A673 (cell line): ENCODE measurements at regions of chr3 and their contacts with region 1.

Region 1: DNA sequence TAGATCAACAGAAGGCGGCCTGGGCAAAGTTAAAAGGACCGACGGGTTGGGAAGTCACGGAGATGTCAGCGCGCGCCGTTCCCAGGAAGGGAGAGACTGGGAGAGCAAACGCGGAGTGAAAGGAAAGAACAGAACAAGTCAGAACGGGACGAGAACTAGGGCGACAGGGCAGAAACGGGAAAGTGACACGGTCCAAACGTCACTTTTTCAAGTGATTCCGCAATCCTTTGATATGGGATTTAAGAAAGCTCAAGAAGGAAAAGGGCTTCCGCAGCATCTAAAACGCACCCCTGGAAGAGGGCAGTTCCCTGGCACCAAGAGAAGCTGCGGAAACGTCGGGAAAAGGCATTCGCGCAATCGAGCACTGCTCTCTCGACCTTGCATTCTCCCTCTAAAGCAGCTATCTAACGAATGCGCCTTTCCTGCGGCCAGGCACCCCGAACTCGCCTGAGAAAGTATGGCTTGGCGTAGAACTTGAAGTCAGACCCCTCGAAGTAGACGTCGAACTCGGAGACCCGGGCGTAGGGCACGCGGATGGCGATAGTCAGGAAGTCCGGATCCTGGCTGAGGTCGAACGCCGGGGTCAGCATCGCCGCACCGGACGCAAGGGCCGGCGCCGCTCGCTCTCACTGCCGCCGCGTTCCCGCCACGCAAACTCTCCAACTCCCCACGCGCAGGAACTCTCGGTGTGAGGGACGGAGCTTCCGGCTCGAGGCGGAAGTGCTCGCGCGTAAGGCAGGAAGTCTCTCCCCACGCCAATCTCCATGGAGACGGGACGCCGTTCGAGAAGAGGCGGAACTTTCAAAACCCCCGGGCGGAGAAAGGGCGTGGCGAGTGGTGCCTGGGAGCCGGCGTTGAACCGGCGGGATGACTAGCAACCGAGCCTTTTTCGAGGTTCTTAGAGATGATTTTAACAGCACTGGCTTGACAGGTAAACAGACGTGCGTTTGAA is at the start of gene SHQ1:
- DNase-seq: peak; percentile 94
- H3K4me3 ChIP-seq: peak within 1 kb of the TSS; percentile 67
- H3K27ac ChIP-seq: peak within 1 kb of the TSS; percentile 57
- H3K4me1 ChIP-seq: no peaks in the 10 kb centered on the region
- H3K27me3 ChIP-seq: no peaks in the 10 kb centered on the region
- CTCF ChIP-seq: no peak
- total RNA-seq, gene SHQ1: 21.1 and 24.3 TPM in 2 replicates

Region 2: DNA sequence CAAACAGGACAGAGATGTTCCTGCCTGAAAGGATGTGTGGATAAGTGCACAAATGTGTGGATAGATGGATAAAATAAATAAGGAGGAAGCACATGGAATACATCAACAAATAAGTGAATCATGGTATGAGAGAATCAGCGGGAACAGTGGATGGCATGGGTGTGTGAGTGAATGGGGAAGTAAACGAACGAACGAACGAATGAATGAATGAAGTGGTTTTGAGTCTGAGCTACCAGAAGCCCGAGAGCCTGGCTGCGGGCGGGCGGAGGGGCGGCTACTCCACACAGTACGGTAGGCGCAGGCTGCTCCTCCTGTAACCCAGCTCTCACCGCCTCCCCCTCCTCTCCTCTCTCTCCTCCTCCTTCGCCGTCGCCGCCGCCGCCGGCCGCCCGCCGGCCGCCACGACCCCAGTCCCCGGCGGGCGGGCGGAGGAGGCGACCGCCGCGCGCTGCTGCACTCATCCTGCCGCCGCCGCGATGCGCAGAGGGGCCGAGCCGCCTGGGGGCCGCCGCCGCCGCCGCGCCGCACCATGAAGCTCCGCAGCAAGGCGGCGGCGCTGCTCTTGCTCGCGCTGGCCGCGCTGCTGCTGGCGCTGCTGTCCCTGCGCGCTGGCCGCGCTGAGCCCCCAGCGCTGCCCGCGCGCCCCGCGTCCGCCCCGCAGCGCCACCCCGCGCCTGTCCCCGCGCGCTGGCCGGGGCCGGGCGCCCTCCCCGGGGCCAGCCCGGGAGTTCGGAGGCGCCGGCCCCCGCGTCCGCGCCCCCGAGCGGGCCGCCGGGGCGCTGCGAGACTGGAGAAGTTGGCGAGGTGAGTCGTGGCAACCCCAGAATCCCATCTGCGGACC is 39.9 kb after region 1 on chr3 and contains the start of gene GXYLT2:
- CTCF ChIA-PET with region 1: no interaction called
- POLR2A ChIA-PET with region 1: no interaction called
- intact Hi-C with region 1: loop called (anchors 5 kb)
- DNase-seq: peak; percentile 76
- H3K4me3 ChIP-seq: peak within 1 kb of the TSS; percentile 58
- H3K27ac ChIP-seq: peak within 1 kb of the TSS; percentile 61
- H3K4me1 ChIP-seq: peaks cover 26% of the 10 kb centered on the region
- H3K27me3 ChIP-seq: no peaks in the 10 kb centered on the region
- CTCF ChIP-seq: no peak
- total RNA-seq, gene GXYLT2: 10.7 and 17.1 TPM in 2 replicates

Region 3: DNA sequence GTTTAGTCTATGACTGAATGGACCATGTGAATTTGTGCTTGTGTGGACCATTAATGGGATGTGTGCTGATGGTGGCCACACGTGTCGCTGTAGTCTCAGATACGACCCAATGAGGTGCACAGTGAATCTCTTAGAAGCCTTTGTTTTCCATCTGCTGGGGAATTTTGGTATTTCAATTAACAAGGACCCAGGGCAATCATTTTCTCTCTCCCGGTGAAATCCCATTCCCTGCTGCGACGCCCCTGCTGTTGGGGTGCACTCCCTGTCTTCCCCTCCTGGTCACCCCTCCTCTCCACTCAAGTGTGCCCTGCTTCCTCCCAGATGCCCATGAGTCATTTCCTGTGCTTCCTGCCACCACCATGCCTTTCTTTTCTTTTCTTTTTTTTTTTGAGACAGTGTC is 246.1 kb after region 1 on chr3:
- CTCF ChIA-PET with region 1: no interaction called
- POLR2A ChIA-PET with region 1: no interaction called
- intact Hi-C with region 1: loop called (anchors 5 kb)
- DNase-seq: peak; percentile 96
- H3K4me3 ChIP-seq: peak overlapping the region; percentile 24
- H3K27ac ChIP-seq: peak overlapping the region; percentile 84
- H3K4me1 ChIP-seq: peaks cover 16% of the 10 kb centered on the region
- H3K27me3 ChIP-seq: no peaks in the 10 kb centered on the region
- CTCF ChIP-seq: peak; percentile 59